ENCODE measurements at regions of chr1 and their contacts with region 1.

Region 1: GRCh38 chr1:164637461-164638375 is 78.7 kb downstream of the PBX1 start:
- DNase-seq: peak; percentile 87
- H3K4me3 ChIP-seq: no peak overlapping the region
- H3K27ac ChIP-seq: peak overlapping the region; percentile 84
- H3K4me1 ChIP-seq: peaks cover 27% of the 10 kb centered on the region
- H3K27me3 ChIP-seq: no peaks in the 10 kb centered on the region
- CTCF ChIP-seq: no peak

Region 2: DNA sequence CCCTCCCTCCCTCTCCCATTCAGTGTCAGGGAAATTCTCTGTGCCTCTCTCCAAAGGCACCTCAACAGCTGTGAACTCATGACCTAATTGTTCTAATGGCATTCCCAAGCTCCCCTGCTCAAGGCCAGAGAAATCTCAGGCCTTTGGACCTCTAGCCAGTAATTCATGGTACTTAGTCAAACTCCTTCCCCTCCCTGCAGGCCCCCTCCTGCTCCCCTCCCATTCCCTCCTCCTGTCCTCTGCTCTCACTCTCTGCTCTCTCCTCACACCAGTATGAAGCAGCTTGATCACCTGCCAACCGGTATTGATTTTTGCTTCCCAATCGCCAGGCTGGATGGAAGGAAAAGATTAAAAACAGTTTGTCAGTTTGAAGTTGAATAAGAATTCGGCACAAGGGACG is 449.2 kb before region 1 on chr1:
- CTCF ChIA-PET with region 1: no interaction called
- dilution Hi-C with region 1: no loop called
- in situ Hi-C with region 1: no loop called
- intact Hi-C with region 1: no loop called
- DNase-seq: no peak
- H3K4me3 ChIP-seq: no peak overlapping the region
- H3K27ac ChIP-seq: no peak overlapping the region
- H3K4me1 ChIP-seq: no peaks in the 10 kb centered on the region
- H3K27me3 ChIP-seq: no peaks in the 10 kb centered on the region
- CTCF ChIP-seq: no peak

Region 3: GRCh38 chr1:164559342-164560051 is 78.2 kb before region 1 on chr1:
- CTCF ChIA-PET with region 1: no interaction called
- dilution Hi-C with region 1: no loop called
- in situ Hi-C with region 1: no loop called
- intact Hi-C with region 1: no loop called
- DNase-seq: peak; percentile 30
- H3K4me3 ChIP-seq: peak overlapping the region; percentile 61 to 94 (median 73)
- H3K27ac ChIP-seq: peak overlapping the region; percentile 69
- H3K4me1 ChIP-seq: no peaks in the 10 kb centered on the region
- H3K27me3 ChIP-seq: no peaks in the 10 kb centered on the region
- CTCF ChIP-seq: no peak

Region 4: GRCh38 chr1:164707868-164708331 is 70.2 kb after region 1 on chr1:
- CTCF ChIA-PET with region 1: no interaction called
- dilution Hi-C with region 1: no loop called
- in situ Hi-C with region 1: no loop called
- intact Hi-C with region 1: loop called (anchors 10 kb)
- DNase-seq: peak; percentile 83
- H3K4me3 ChIP-seq: no peak overlapping the region
- H3K27ac ChIP-seq: no peak overlapping the region
- H3K4me1 ChIP-seq: peaks cover 22% of the 10 kb centered on the region
- H3K27me3 ChIP-seq: no peaks in the 10 kb centered on the region
- CTCF ChIP-seq: no peak